ENCODE measurements at regions of chr18 and their contacts with region 1.

Region 1: DNA sequence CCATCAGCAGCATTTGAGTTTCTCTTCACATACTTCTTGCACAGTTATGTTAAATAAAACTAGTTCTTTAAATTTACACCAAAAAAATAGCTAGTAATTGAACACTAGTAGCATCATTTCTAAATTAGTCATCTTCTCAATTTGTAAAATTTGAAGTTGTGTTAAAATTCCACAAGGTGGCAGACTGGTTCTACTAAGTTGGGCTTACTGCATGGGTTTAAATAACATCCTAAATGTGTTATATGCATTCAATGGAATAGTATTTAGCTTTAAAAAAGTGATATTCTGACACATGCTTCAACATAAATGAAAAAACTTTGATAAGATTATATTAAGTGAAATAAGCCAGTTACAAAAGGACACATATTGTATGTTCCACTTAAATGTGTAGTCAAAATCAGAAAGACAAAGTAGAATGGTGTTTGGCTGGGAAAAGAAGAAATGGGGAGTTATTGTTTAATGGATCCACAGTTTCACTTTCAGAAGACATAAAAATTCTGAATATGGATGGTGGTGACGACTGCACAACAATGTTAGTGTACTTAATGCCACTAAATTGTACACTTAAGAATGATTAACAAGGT is 28.7 kb upstream of the RPRD1A start:
- DNase-seq: peak in 4 of 5 donors; percentile 42 to 47 (median 44)
- H3K4me3 ChIP-seq: no peak overlapping the region
- H3K4me3 Mint-ChIP-seq: no peak overlapping the region
- H3K27ac ChIP-seq: no peak overlapping the region
- H3K27ac Mint-ChIP-seq: no peak overlapping the region
- H3K4me1 ChIP-seq: no peaks in the 10 kb centered on the region
- H3K4me1 Mint-ChIP-seq: peaks cover 9 to 13% (median 11%) of the 10 kb centered on the region in 4 donors
- H3K27me3 ChIP-seq: no peaks in the 10 kb centered on the region
- H3K27me3 Mint-ChIP-seq: peaks cover 2 to 5% of the 10 kb centered on the region in 2 donors

Region 2: GRCh38 chr18:36107477-36107876 is 11.4 kb after region 1 on chr18:
- CTCF ChIA-PET with region 1: interaction called, 17 read pairs
- POLR2A ChIA-PET with region 1: no interaction called
- intact Hi-C with region 1: no loop called
- DNase-seq: no peak
- H3K4me3 ChIP-seq: no peak overlapping the region
- H3K4me3 Mint-ChIP-seq: no peak overlapping the region
- H3K27ac ChIP-seq: no peak overlapping the region
- H3K27ac Mint-ChIP-seq: no peak overlapping the region
- H3K4me1 ChIP-seq: peaks cover 3% of the 10 kb centered on the region
- H3K4me1 Mint-ChIP-seq: peaks cover 0 to 5% (median 2%) of the 10 kb centered on the region in 4 donors
- H3K27me3 ChIP-seq: no peaks in the 10 kb centered on the region
- H3K27me3 Mint-ChIP-seq: no peaks in the 10 kb centered on the region

Region 3: GRCh38 chr18:36441426-36442240 is 345.6 kb after region 1 on chr18:
- CTCF ChIA-PET with region 1: no interaction called
- POLR2A ChIA-PET with region 1: no interaction called
- intact Hi-C with region 1: no loop called
- DNase-seq: no peak
- H3K4me3 ChIP-seq: no peak overlapping the region
- H3K4me3 Mint-ChIP-seq: no peak overlapping the region
- H3K27ac ChIP-seq: no peak overlapping the region
- H3K27ac Mint-ChIP-seq: no peak overlapping the region
- H3K4me1 ChIP-seq: no peaks in the 10 kb centered on the region
- H3K4me1 Mint-ChIP-seq: no peaks in the 10 kb centered on the region
- H3K27me3 ChIP-seq: no peaks in the 10 kb centered on the region
- H3K27me3 Mint-ChIP-seq: peaks cover 8 to 19% of the 10 kb centered on the region in 2 donors